ENCODE measurements at regions of chr5 and their contacts with region 1.

Region 1: DNA sequence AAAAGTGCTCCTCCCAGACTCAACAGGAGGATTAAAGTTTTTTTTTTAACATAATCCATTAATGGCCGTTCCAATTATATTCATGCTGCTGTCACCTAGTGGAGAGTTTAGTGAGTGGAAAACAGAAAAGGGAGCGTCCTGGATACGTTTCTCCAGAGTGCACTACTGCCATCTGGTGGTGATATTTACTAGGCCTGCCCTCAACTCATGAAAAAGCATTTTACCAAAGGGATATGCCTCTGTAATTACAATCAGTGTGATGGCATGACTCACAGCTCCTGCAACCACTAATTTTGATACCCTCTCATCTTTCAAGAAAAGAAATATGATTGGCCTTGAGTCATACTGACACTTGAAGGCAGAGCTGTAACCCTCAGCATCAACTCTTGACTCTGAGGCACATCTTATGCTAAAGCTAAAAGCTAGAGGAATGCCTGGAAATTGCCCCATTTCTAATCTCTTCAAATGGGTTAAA is 20.0 kb downstream of the MINAR2 start:
- DNase-seq: peak; percentile 58
- H3K4me3 ChIP-seq: peak overlapping the region in 1 of 2 experiments; percentile 11; a peak in 1 of 4 replicates
- H3K27ac ChIP-seq: no peak overlapping the region
- H3K4me1 ChIP-seq: no peaks in the 10 kb centered on the region
- H3K27me3 ChIP-seq: peaks cover 5% of the 10 kb centered on the region
- CTCF ChIP-seq: peak; percentile 99
- EP300 ChIP-seq: no peak
- RAD21 ChIP-seq: peak; percentile 94

Region 2: DNA sequence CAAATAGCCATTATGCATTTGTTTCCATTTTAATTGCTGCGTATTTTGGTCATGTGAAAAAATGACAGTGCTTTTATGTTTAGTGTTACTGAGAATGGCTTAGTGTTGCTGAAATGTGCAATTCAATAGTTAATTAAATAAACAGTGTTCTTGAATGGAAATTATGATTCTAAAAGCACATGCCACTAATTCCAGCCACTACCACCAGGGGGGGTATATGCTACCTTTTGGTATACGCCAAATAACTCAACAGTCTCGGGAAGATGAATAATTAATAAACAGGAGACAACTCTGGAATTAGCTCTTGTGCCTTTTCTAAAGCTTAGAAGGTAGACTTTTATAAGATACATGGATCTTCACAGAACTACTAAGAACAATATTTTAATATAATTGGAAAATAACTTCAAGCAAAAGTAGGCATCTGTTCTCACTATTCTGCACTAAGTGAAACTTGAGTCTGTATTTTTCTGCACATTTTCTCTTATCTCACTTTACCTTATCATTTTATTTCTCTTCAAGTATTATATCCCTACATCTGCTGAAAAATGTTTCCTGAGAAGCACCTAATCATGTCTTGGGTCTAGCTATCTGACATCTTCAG is 103.5 kb before region 1 on chr5:
- CTCF ChIA-PET with region 1: interaction called, 14 read pairs
- POLR2A ChIA-PET with region 1: no interaction called
- DNase-seq: peak; percentile 16
- H3K4me3 ChIP-seq: peak overlapping the region; percentile 27 to 35; a peak in 2 of 4 replicates
- H3K27ac ChIP-seq: no peak overlapping the region
- H3K4me1 ChIP-seq: no peaks in the 10 kb centered on the region
- H3K27me3 ChIP-seq: no peaks in the 10 kb centered on the region
- CTCF ChIP-seq: peak; percentile 90
- EP300 ChIP-seq: no peak
- RAD21 ChIP-seq: peak; percentile 44; the same call in 1 of the 2 replicates

Region 3: GRCh38 chr5:129781594-129781993 is 13.7 kb after region 1 on chr5:
- CTCF ChIA-PET with region 1: interaction called, 13 read pairs
- POLR2A ChIA-PET with region 1: no interaction called
- DNase-seq: no peak
- H3K4me3 ChIP-seq: no peak overlapping the region
- H3K27ac ChIP-seq: no peak overlapping the region
- H3K4me1 ChIP-seq: no peaks in the 10 kb centered on the region
- H3K27me3 ChIP-seq: no peaks in the 10 kb centered on the region
- CTCF ChIP-seq: no peak
- EP300 ChIP-seq: no peak
- RAD21 ChIP-seq: no peak

Region 4: DNA sequence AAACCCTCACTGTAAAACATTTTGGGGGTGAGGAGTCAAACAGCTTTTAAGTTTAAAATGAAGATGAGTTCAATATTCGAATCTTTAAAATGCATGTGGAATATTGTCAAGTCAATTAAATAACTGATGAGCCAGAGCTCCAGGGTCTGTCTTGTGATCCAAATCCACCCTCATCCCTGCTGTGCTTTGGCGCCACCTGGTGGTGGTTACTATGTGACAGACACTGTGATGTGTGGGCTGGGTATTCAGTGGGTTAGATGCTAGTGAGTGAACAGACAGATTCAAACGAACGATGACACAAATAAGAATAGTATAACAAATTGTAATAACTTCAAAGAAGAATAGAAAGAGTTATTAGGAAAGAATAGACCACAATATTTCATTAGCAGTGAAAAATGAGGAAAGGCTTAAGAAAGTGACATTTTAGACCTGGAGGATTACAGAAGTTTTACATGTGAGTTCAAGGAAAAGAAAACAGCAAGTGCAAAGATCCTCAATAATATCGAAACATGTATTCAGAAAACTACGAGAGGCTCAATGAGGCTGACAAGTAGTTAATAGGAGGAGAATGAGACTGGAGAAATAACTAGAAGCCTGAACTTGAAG is 84.9 kb after region 1 on chr5:
- CTCF ChIA-PET with region 1: interaction called, 93 read pairs
- POLR2A ChIA-PET with region 1: no interaction called
- DNase-seq: peak; percentile 46
- H3K4me3 ChIP-seq: no peak overlapping the region; a peak in 1 of 4 replicates
- H3K27ac ChIP-seq: no peak overlapping the region
- H3K4me1 ChIP-seq: no peaks in the 10 kb centered on the region
- H3K27me3 ChIP-seq: peaks cover 4% of the 10 kb centered on the region; the same call in 1 of the 2 replicates
- CTCF ChIP-seq: peak; percentile 97
- EP300 ChIP-seq: no peak
- RAD21 ChIP-seq: peak; percentile 72

Measured in SK-N-SH (cell line).